Cardiac septum (tissue), 1 donor: ENCODE measurements at regions of chr16 and their contacts with region 1.

Region 1: GRCh38 chr16:15765880-15766279 is 90.9 kb downstream of the MYH11 start:
- DNase-seq: no peak

Region 2: GRCh38 chr16:15822957-15823356 is 57.1 kb after region 1 on chr16:
- intact Hi-C with region 1: loop called (anchors 5 kb)
- DNase-seq: peak; percentile 69

Region 3: GRCh38 chr16:15835136-15835878 is 69.4 kb after region 1 on chr16:
- intact Hi-C with region 1: no loop called
- DNase-seq: no peak

Region 4: GRCh38 chr16:16127469-16128116 is 361.7 kb after region 1 on chr16:
- intact Hi-C with region 1: loop called (anchors 5 kb)
- DNase-seq: peak; percentile 82

Region 5: GRCh38 chr16:16191493-16192167 is 425.8 kb after region 1 on chr16:
- intact Hi-C with region 1: loop called (anchors 10 kb)
- DNase-seq: no peak